ENCODE measurements at regions of chrX and their contacts with region 1.

Region 1: DNA sequence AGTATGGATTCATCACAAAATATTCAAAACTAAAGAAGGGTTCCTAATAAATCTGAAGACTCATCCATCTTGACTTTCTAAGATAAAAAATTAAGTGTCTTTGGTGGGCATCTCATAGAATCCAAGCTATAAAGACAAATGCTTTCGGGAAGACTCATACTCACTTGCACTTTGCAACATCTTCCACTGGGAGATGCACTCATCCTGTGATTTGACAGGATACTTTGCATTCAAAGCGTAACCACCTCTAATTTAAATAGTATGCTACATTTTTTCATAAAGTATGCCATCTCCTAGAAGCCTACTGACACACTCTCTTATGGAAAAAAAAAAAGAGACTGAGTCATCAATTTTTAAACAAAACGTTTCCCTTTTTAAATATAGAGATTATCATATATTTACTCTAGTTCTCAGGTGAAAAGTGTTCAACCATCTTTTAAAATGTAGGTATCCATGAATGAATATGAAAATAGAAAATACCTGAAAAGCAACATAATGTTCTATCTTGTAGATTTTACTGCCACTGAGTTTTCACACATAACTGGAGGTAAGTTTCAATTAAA is 119.6 kb downstream of the KLHL13 start:
- DNase-seq: peak; percentile 67
- H3K4me3 ChIP-seq: peak overlapping the region in 2 of 3 experiments; percentile 26 to 29
- H3K27ac ChIP-seq: peak overlapping the region; percentile 50
- H3K4me1 ChIP-seq: peaks cover 28% of the 10 kb centered on the region
- H3K27me3 ChIP-seq: no peaks in the 10 kb centered on the region
- CTCF ChIP-seq: peak; percentile 83 to 93

Region 2: DNA sequence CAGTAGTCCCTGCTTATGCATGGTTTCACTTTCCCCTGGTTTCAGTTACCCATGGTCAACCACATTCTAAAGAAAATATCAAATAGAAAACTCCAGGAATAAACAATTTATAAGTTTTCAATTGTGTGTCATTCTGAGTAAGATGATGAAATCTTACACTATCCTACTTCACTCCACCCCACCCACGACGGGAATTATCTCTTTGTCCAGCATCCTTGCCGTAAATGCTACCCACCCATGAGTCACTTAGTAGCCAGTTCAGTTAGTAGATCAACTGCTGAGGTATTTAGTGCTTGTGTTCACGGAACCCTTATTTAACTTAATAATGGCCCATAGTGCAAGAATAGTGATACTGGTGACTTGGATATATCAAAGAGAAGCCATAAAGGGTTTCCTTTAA is 28.2 kb after region 1 on chrX:
- CTCF ChIA-PET with region 1: no interaction called
- dilution Hi-C with region 1: no loop called
- in situ Hi-C with region 1: no loop called
- intact Hi-C with region 1: no loop called
- DNase-seq: no peak
- H3K4me3 ChIP-seq: no peak overlapping the region
- H3K27ac ChIP-seq: no peak overlapping the region
- H3K4me1 ChIP-seq: no peaks in the 10 kb centered on the region
- H3K27me3 ChIP-seq: no peaks in the 10 kb centered on the region
- CTCF ChIP-seq: no peak

Region 3: GRCh38 chrX:118088084-118088483 is 91.1 kb after region 1 on chrX:
- CTCF ChIA-PET with region 1: no interaction called
- dilution Hi-C with region 1: no loop called
- in situ Hi-C with region 1: no loop called
- intact Hi-C with region 1: no loop called
- DNase-seq: no peak
- H3K4me3 ChIP-seq: no peak overlapping the region
- H3K27ac ChIP-seq: no peak overlapping the region
- H3K4me1 ChIP-seq: no peaks in the 10 kb centered on the region
- H3K27me3 ChIP-seq: no peaks in the 10 kb centered on the region
- CTCF ChIP-seq: no peak

Region 4: DNA sequence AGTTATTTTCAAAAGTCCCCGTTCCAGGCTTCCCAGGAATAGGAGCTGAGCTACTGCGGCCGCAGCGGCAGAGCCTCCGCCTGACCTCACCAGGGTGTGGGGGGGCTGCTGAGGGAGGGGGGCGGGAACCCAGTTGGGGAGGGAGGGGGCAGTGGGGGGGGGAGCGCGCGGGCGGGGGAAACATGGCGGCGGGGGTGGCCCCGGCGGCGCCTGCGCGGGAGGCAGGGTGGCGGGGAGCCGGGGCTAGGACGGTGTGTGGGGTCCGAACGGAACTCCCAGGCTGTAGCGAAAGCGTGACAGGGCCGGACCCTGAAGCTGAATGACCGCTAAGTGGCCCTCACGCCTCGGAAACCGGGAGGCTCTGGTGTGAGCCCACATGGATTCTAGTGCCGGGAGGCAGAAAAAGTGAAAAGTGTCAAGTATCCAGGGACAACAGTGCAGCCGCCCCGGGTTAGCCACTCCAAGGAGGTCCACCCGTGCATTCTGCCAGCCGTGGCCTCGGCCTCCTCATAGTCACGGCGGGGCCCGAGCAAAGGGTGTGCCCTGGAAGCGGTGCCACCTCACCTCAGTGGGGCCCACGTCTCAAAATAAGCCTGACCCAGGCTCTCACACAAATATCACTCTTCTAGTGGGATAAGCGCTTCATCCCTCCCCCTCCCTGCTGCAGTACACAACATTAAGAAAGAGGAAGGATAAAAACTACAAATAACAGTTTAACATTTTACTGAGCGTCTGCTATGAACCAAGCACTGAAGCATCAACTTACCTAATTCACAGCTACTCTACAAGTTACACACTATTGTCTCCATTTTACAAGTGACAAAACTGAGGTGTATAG is 119.9 kb after region 1 on chrX and contains the start of gene KLHL13:
- CTCF ChIA-PET with region 1: no interaction called
- dilution Hi-C with region 1: no loop called
- in situ Hi-C with region 1: no loop called
- intact Hi-C with region 1: loop called (anchors 1 kb)
- DNase-seq: peak; percentile 28
- H3K4me3 ChIP-seq: peak within 1 kb of the TSS; percentile 54 to 72 (median 71)
- H3K27ac ChIP-seq: peak within 1 kb of the TSS; percentile 40
- H3K4me1 ChIP-seq: peaks cover 7% of the 10 kb centered on the region
- H3K27me3 ChIP-seq: peaks cover 2% of the 10 kb centered on the region
- CTCF ChIP-seq: no peak
- total RNA-seq, gene KLHL13: 8.7 to 23.0 TPM

Region 5: DNA sequence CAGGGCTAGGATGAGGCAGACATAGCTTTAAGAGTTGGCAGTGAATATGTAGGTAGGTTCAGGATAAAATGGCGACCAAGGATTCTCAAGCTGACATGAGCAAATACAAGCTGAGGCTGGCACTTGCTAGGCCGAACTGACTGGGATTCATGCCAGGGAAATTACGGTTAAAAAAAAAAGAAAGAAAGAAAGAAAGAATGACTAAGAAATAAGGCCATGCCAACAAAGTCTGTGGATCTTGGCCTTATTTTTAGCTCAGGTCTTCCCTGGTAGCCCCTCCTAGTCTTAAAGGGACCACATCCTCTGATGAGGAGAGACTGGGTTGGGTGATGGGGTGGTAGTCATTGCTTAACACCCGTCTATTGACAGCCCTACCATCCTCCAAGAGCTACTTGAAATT is 184.0 kb after region 1 on chrX:
- CTCF ChIA-PET with region 1: no interaction called
- dilution Hi-C with region 1: no loop called
- in situ Hi-C with region 1: no loop called
- intact Hi-C with region 1: loop called (anchors 1 kb)
- DNase-seq: peak; percentile 73
- H3K4me3 ChIP-seq: no peak overlapping the region
- H3K27ac ChIP-seq: no peak overlapping the region
- H3K4me1 ChIP-seq: peaks cover 5% of the 10 kb centered on the region
- H3K27me3 ChIP-seq: no peaks in the 10 kb centered on the region
- CTCF ChIP-seq: no peak

Region 6: DNA sequence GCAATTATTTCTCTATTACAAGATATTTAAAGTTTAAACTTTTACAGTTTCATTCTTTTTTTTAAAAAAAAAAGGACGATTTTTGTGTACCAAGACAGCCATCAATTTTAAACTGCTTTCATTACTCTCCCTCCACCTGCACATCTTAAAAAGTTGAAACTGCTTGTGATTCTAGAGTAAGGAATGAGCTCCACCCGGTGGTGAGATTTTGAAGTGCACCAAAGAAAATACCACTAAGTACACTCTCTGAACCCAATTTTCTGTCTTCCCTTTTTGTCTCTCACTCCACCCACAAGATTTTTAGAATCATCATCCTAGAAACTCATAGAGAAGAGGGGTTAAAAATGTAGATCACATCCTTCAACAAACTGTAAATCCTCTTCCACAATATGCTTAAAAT is 257.6 kb after region 1 on chrX:
- CTCF ChIA-PET with region 1: interaction called, 3 read pairs
- dilution Hi-C with region 1: no loop called
- in situ Hi-C with region 1: no loop called
- intact Hi-C with region 1: loop called (anchors 1 kb)
- DNase-seq: peak; percentile 26
- H3K4me3 ChIP-seq: no peak overlapping the region
- H3K27ac ChIP-seq: no peak overlapping the region
- H3K4me1 ChIP-seq: no peaks in the 10 kb centered on the region
- H3K27me3 ChIP-seq: peaks cover 2% of the 10 kb centered on the region
- CTCF ChIP-seq: peak; percentile 70 to 73